ENCODE measurements at regions of chr1 and their contacts with region 1.

Region 1: DNA sequence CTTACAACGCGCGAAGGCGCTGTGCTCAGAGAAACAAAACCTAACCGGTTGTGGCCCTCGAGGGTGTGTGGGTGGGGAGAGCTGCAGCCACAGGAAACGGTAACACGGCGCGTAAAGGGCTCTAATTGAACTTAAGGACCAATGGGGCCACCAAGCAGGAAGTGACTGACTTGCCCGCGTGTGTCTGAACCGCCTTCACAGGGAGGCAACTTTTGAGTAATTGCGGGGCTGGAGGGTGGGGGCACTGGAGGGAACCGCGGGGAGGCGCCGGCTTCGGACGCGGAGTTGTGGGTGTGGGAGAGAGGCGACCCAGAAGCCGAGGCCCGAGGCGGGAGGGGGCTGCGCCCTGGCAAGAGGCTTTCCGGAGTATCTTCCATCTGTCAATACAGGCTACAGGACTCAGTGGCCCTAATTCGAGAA is 577 bp upstream of the PNRC2 start:
- DNase-seq: peak; percentile 96
- ATAC-seq: peak; percentile 87
- H3K4me3 ChIP-seq: peak overlapping the region; percentile 87
- H3K27ac ChIP-seq: peak overlapping the region; percentile 97
- H3K4me1 ChIP-seq: peaks cover 31% of the 10 kb centered on the region
- H3K27me3 ChIP-seq: no peaks in the 10 kb centered on the region
- CTCF ChIP-seq: peak in 2 of 3 experiments; percentile 19 to 67; a peak in 3 of 6 replicates
- EP300 ChIP-seq: peak in 1 of 2 experiments; percentile 50; a peak in 1 of 4 replicates
- POLR2A ChIP-seq: peak; percentile 68
- RAD21 ChIP-seq: peak; percentile 41

Region 2: DNA sequence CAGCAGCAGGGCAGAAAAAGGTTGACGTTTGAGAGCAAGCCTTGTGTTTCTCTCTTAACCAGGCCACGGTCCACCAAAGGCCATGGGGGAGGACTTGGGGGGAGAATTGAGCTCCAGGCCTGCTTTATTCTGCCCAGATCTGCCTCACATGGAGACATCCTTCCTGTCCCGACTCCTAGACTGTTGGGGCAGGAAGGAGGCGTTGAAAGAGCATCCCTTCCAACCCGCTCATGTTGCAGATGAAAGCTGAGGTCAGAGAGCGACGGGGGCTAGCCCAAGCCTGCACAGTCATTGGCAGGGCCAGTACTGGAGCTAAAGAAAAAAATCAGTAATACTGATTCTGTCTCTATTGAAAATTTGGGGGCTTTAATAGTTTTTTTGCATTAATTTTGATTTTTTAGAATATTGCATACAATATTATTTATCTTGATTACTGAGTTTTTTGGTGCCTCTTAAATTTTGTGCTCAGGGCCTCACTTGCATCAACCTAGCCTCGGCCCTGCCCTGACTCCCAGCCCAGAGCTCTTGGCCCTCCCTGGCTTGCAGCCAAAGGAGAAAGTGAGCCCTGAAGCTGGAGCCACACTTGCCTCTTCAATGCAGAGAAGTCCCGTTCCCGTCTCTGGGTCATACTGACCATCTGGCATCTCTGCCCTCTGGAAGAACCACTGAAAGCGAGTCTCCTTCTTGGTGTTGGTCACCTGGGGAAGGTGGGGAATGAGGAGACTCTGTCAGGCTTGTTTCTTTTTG is 106.4 kb after region 1 on chr1:
- CTCF ChIA-PET with region 1: no interaction called
- POLR2A ChIA-PET with region 1: no interaction called
- RAD21 ChIA-PET with region 1: no interaction called
- SMC1A ChIA-PET with region 1: no interaction called
- in situ Hi-C with region 1: no loop called
- intact Hi-C with region 1: no loop called
- DNase-seq: no peak
- ATAC-seq: no peak
- H3K4me3 ChIP-seq: no peak overlapping the region
- H3K27ac ChIP-seq: no peak overlapping the region
- H3K4me1 ChIP-seq: no peaks in the 10 kb centered on the region
- H3K27me3 ChIP-seq: peaks cover 0 to 1% of the 10 kb centered on the region in 2 experiments; a peak in 3 of 4 replicates
- CTCF ChIP-seq: no peak
- EP300 ChIP-seq: no peak
- POLR2A ChIP-seq: no peak
- RAD21 ChIP-seq: no peak

Region 3: DNA sequence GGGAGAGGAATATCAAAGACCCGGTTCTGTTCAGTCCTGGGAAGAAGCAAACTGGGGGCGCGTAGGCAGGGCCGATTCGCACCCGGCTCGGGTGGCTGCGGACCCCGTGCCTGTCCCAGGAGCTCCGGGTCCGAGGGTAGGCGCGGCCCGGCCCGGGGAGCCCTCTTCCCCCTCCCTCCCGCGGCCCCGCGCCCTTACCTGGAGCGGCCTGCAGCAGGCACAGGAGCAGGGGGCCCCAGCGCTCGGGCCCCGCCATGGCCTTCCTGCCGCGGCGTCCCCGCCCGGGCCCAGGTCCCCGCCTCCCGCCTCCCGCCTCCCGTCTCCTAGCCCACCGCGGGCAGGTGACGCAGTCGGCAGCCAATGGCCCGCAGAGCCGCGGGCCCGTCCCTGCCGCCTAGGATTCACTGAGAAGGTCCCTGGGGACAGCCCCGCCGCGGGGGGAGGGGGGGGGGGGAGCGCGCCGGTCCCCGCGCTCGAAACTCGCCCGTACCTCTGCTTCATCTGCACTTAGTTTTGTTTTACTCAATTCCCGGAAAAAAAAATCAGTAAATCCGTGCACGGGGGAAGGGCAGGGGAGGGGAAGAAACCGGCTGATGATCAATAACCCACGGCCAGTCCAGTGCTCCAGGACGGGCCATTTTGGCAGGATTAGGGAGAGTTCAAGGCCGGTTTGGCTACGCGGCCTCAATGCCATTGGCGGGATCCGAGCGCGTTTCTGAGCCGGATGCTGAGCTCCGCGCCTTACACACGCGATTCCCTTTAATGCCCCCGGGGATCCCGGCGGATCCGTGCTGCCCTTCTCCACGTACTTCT is 228.1 kb after region 1 on chr1 and contains the start of gene IFNLR1:
- CTCF ChIA-PET with region 1: no interaction called
- POLR2A ChIA-PET with region 1: no interaction called
- RAD21 ChIA-PET with region 1: no interaction called
- SMC1A ChIA-PET with region 1: no interaction called
- in situ Hi-C with region 1: no loop called
- intact Hi-C with region 1: loop called (anchors 5 kb)
- DNase-seq: no peak
- ATAC-seq: peak; percentile 52
- H3K4me3 ChIP-seq: peak within 1 kb of the TSS; percentile 71; the same call in 1 of the 2 replicates
- H3K27ac ChIP-seq: peak within 1 kb of the TSS; percentile 5; the same call in 1 of the 2 replicates
- H3K4me1 ChIP-seq: peaks cover 47% of the 10 kb centered on the region
- H3K27me3 ChIP-seq: peaks cover 0 to 4% of the 10 kb centered on the region in 2 experiments; a peak in 2 of 4 replicates
- CTCF ChIP-seq: no peak
- EP300 ChIP-seq: no peak
- POLR2A ChIP-seq: peak; percentile 68
- RAD21 ChIP-seq: no peak
- polyA plus RNA-seq, gene IFNLR1: 0.31 to 0.88 TPM

Measured in GM12878 (cell line).